HCT116 (cell line): ENCODE measurements at regions of chr15 and their contacts with region 1.

Region 1: GRCh38 chr15:81256916-81257315 is 60.2 kb downstream of the IL16 start:
- DNase-seq: peak; percentile 32
- ATAC-seq: peak; percentile 68
- H3K4me3 ChIP-seq: no peak overlapping the region
- H3K27ac ChIP-seq: no peak overlapping the region
- H3K4me1 ChIP-seq: no peaks in the 10 kb centered on the region
- H3K27me3 ChIP-seq: peaks cover 12% of the 10 kb centered on the region
- CTCF ChIP-seq: peak; percentile 36 to 60 (median 54)
- POLR2A ChIP-seq: no peak
- RAD21 ChIP-seq: peak; percentile 66

Region 2: GRCh38 chr15:80989518-80990478 is 267.1 kb before region 1 on chr15 and contains the start of gene MESD:
- CTCF ChIA-PET with region 1: no interaction called
- POLR2A ChIA-PET with region 1: no interaction called
- RAD21 ChIA-PET with region 1: no interaction called
- intact Hi-C with region 1: no loop called
- DNase-seq: peak; percentile 85
- ATAC-seq: peak; percentile 98
- H3K4me3 ChIP-seq: peak within 1 kb of the TSS; percentile 97 to 100
- H3K27ac ChIP-seq: peak within 1 kb of the TSS; percentile 77
- H3K4me1 ChIP-seq: peaks cover 13 to 29% of the 10 kb centered on the region in 2 experiments; a peak in 3 of 4 replicates
- H3K27me3 ChIP-seq: no peaks in the 10 kb centered on the region
- CTCF ChIP-seq: no peak
- POLR2A ChIP-seq: peak; percentile 89
- RAD21 ChIP-seq: no peak
- total RNA-seq, gene MESD: 22.5 TPM

Region 3: DNA sequence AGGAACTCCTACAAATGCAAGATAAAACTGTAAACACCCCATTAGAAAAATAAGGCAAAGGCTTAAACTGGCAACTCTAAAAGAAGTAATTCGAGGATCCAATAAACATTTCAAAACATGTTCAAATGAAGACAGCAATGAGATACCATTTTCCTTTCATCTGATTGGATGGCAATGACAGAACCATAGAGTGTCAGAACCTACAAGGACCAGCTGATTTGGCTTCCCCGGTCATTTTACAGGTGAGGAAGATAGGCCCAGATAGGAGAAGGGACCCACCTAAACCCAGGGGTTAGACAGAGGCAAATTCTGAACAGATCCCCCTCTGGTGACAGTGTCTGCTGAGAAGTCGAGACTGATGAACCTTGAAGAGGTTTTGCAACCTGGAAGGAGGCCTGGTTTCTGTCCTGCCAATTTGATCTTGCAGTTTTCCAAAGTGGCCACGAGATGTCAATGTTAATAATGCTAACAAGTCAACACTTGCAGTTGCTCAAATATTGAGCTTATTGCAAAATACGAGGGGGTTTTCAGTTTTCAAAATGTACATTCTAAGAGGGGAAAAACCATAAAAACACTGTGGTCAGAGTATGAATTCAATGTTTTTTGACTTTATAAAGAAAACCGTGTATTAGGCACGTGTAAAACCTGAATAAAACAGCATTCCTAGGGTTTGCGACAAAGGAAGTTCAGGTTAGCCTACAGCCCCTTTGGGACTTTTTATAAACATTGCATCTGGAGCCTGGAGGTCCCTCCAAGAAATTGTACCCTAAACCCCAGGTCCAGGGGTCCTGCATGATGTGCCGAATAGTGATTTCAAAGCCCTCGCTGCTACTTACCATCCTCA is 101.3 kb before region 1 on chr15:
- CTCF ChIA-PET with region 1: interaction called, 9 read pairs
- POLR2A ChIA-PET with region 1: no interaction called
- RAD21 ChIA-PET with region 1: no interaction called
- intact Hi-C with region 1: loop called (anchors 2 kb)
- DNase-seq: peak; percentile 45
- ATAC-seq: peak; percentile 82
- H3K4me3 ChIP-seq: no peak overlapping the region
- H3K27ac ChIP-seq: no peak overlapping the region
- H3K4me1 ChIP-seq: no peaks in the 10 kb centered on the region
- H3K27me3 ChIP-seq: no peaks in the 10 kb centered on the region
- CTCF ChIP-seq: peak; percentile 48 to 71 (median 66)
- POLR2A ChIP-seq: no peak
- RAD21 ChIP-seq: peak; percentile 61

Region 4: GRCh38 chr15:82551666-82552247 is 1294.8 kb after region 1 on chr15:
- CTCF ChIA-PET with region 1: no interaction called
- POLR2A ChIA-PET with region 1: no interaction called
- RAD21 ChIA-PET with region 1: no interaction called
- intact Hi-C with region 1: no loop called
- DNase-seq: no peak
- ATAC-seq: peak; percentile 34; the same call in 1 of the 2 replicates
- H3K4me3 ChIP-seq: no peak overlapping the region
- H3K27ac ChIP-seq: no peak overlapping the region
- H3K4me1 ChIP-seq: peaks cover 0 to 3% of the 10 kb centered on the region in 2 experiments; a peak in 1 of 4 replicates
- H3K27me3 ChIP-seq: peaks cover 14% of the 10 kb centered on the region
- CTCF ChIP-seq: no peak
- POLR2A ChIP-seq: no peak
- RAD21 ChIP-seq: no peak